Activated CD8-positive, alpha-beta memory T cell treated with anti-CD3 and anti-CD28 coated beads, Interleukin-2, amount 10 ng/mL, durations not matched to agents 7 days and 5 days (primary cell): ENCODE measurements at regions of chr12 and their contacts with region 1.

Region 1: DNA sequence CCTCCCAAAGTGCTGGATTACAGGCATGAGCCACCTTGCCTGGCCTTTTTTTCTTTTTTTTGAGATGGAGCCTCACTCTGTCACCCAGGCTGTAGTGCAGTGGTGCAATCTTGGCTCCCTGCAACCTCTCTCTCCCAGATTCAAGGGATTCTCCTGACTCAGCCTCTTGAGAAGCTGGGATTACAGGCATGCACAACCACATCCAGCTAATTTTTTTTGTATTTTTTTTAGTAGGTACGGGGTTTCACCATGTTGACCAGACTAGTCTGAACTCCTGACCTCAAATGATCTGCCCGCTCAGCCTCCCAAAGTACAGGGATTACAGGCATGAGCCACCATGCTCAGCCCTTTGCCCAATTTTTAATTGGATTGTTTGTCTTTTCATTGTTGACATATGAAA is 58.0 kb downstream of the SINHCAF start:
- DNase-seq: no peak
- ATAC-seq: no peak
- H3K4me3 Mint-ChIP-seq: no peak overlapping the region
- H3K27ac Mint-ChIP-seq: no peak overlapping the region
- H3K4me1 Mint-ChIP-seq: peaks cover 2% of the 10 kb centered on the region
- H3K27me3 Mint-ChIP-seq: no peaks in the 10 kb centered on the region

Region 2: GRCh38 chr12:31238764-31239387 is 29.1 kb before region 1 on chr12:
- CTCF ChIA-PET with region 1: interaction called, 13 read pairs
- DNase-seq: peak; percentile 73
- ATAC-seq: peak; percentile 86
- H3K4me3 Mint-ChIP-seq: no peak overlapping the region
- H3K27ac Mint-ChIP-seq: no peak overlapping the region
- H3K4me1 Mint-ChIP-seq: peaks cover 13% of the 10 kb centered on the region
- H3K27me3 Mint-ChIP-seq: peaks cover 34% of the 10 kb centered on the region

Region 3: GRCh38 chr12:31297572-31298512 is 29.9 kb after region 1 on chr12:
- CTCF ChIA-PET with region 1: interaction called, 12 read pairs
- DNase-seq: no peak
- ATAC-seq: no peak
- H3K4me3 Mint-ChIP-seq: no peak overlapping the region
- H3K27ac Mint-ChIP-seq: peak overlapping the region; percentile 51
- H3K4me1 Mint-ChIP-seq: peaks cover 23% of the 10 kb centered on the region
- H3K27me3 Mint-ChIP-seq: no peaks in the 10 kb centered on the region

Region 4: DNA sequence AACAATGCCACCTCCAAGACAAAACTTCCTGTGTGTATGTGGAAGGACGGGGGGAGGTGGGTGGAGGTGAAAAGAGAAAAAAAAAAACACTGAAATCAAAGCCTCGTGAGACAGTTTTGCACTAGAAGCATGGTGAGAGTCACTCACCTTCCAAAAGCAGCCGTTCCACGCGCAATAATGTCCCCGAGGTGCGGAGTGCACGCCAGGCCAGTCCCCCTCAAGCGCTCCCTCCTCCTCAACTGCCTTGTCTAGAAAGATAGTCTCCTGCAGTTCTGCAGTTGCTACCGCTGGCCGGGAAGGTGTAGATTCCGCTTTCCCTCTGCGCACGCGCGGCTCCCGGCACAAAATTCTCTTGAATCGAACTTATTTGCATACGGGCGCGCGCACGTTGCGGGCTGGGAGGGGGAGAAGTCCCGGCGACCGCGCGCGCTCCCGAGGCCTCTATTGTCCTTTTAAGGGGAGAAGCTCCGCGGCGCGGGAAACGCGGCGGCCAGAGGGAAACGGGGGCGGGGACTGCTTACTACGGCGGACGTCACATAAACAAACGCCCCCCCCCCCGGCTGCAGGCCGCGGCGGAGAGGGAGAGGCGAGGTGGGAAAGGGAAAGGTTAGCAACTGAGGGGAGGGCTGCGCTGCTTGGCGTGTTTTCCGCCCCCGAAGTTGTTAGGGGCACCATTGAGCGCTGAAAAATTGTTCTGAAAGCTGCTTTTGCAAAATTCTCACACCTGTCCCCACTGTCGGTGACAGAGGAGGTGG is 58.1 kb after region 1 on chr12 and contains the start of gene SINHCAF:
- CTCF ChIA-PET with region 1: interaction called, 13 read pairs
- DNase-seq: peak; percentile 99
- ATAC-seq: peak; percentile 64
- H3K4me3 Mint-ChIP-seq: peak within 1 kb of the TSS; percentile 99
- H3K27ac Mint-ChIP-seq: peak within 1 kb of the TSS; percentile 100
- H3K4me1 Mint-ChIP-seq: peaks cover 28% of the 10 kb centered on the region
- H3K27me3 Mint-ChIP-seq: peaks cover 3% of the 10 kb centered on the region
- total RNA-seq, gene SINHCAF: 78.5 to 120 TPM